ENCODE measurements at regions of chr1 and their contacts with region 1.

Region 1: GRCh38 chr1:150649441-150650075 is 20.1 kb upstream of the ENSA start:
- DNase-seq: no peak
- ATAC-seq: no peak
- H3K4me3 ChIP-seq: no peak overlapping the region
- H3K27ac ChIP-seq: no peak overlapping the region
- H3K4me1 ChIP-seq: no peaks in the 10 kb centered on the region
- H3K27me3 ChIP-seq: no peaks in the 10 kb centered on the region
- CTCF ChIP-seq: no peak

Region 2: DNA sequence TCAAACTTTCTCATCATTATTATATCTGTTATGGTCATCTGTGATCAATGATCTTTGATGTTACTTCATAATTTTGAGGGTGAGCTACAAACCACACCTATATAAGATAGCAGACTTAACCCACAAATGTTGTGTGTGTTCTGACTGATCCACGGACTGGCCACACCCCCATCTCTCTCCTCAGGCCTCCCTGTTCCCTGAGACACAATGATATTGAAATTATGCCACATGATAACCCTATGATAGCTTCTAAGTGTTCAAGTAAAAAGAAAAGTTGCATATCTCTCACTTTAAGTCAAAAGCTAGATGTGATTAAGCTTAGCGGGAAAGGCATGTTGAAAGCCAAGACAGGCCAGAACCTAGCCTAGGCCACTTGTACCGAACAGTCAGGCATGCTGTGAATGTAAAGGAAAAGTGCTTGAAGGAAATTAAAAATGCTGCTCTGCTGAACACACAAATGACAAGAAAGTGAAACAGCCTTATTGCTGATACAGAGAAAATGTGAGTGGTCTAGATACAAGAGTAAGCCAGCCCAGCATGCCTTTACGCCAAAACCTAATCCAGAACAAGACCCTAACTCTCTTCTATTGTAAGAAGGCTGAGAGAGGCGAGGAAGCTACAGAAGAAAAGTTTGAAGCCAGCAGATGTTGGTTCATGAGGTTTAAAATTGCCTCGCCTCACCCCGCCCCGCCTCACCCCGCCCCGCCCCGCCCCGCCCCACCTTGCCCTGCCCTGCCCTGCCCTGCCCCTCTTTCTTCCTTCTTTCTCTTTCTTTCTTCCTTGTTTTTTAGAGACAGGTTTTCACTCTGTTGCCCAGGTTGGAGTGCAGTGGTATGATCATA is 99.5 kb after region 1 on chr1:
- intact Hi-C with region 1: loop called in 1 of 2 experiments (anchors 10 kb)
- DNase-seq: no peak
- ATAC-seq: no peak
- H3K4me3 ChIP-seq: no peak overlapping the region
- H3K27ac ChIP-seq: no peak overlapping the region
- H3K4me1 ChIP-seq: no peaks in the 10 kb centered on the region
- H3K27me3 ChIP-seq: no peaks in the 10 kb centered on the region
- CTCF ChIP-seq: no peak

Region 3: DNA sequence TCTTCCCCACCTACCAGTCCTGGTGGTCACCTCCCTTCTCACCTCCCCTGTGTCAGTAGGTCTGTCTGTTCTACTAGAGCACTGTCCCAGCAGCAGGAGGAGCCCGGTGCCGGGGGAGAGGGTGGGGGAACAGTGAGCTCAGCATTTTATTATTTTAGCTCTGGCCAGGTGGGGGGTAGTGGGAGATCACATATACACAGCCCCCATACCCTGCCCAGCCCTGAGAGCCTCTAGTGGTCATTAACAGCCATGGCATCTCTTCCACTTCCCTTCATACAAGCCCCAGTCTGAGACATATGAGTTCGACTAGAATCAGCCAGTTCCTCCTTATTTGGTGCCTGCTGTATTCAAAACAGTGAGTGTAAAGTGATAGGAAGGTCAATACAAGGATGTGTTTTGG is 526.4 kb after region 1 on chr1 and contains the start of gene TMOD4:
- intact Hi-C with region 1: no loop called
- DNase-seq: peak in 1 of 2 donors; percentile 82
- ATAC-seq: peak; percentile 82 to 86 (median 84)
- H3K4me3 ChIP-seq: peak within 1 kb of the TSS; percentile 79
- H3K27ac ChIP-seq: peak within 1 kb of the TSS; percentile 92
- H3K4me1 ChIP-seq: peaks cover 14% of the 10 kb centered on the region
- H3K27me3 ChIP-seq: no peaks in the 10 kb centered on the region
- CTCF ChIP-seq: peak; percentile 71
- total RNA-seq, gene TMOD4: 102 to 434 (median 407) TPM